Naive thymus-derived CD4-positive, alpha-beta T cell (primary cell): ENCODE measurements at regions of chr12 and their contacts with region 1.

Region 1: DNA sequence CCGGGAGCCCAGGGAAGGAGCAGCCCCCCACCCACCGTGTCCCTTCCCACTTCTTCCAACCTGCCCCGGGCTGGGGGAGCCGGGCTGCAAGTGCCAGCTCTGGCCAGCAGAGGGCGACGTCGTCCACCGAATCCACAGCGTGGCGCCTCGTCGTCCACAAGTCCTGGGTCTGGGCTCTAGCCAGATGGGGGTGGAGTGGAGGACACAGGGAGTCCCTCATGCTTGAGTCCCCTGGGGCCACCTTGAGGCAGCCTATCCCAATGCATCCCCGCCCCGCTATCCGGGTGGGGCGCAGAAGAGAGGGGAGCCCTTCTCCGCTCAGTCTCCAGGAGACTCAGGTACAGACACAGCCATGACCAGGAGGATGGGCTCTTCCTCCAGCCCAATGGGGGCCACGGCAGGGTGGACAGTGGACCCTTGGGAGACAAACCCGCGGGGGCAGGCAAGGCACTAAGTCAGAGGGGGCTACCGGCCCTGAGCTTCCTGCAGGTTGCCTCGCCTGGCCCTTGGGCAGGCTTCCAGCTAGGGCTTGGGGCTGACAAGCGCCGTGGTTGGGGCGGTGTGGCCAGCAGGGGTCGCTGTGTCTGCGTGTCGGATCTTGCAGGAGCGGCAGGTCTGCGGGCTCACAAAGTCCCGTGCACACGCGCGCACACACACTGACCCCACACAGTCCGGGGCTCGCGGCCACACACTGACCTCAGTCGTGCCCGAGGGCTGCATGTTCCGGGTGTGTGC is 5.5 kb downstream of the AQP5 start:
- DNase-seq: peak; percentile 81 to 98 (median 93)
- ATAC-seq: peak; percentile 93
- H3K4me3 ChIP-seq: peak overlapping the region; percentile 81
- H3K4me3 Mint-ChIP-seq: peak overlapping the region; percentile 70 to 83 (median 80)
- H3K27ac ChIP-seq: no peak overlapping the region
- H3K27ac Mint-ChIP-seq: peak overlapping the region in 1 of 9 donors; percentile 14
- H3K4me1 ChIP-seq: peaks cover 0 to 9% of the 10 kb centered on the region in 2 donors
- H3K4me1 Mint-ChIP-seq: peaks cover 0 to 12% (median 4%) of the 10 kb centered on the region in 7 donors
- H3K27me3 ChIP-seq: no peaks in the 10 kb centered on the region
- H3K27me3 Mint-ChIP-seq: peaks cover 31 to 41% (median 35%) of the 10 kb centered on the region in 5 donors

Region 2: DNA sequence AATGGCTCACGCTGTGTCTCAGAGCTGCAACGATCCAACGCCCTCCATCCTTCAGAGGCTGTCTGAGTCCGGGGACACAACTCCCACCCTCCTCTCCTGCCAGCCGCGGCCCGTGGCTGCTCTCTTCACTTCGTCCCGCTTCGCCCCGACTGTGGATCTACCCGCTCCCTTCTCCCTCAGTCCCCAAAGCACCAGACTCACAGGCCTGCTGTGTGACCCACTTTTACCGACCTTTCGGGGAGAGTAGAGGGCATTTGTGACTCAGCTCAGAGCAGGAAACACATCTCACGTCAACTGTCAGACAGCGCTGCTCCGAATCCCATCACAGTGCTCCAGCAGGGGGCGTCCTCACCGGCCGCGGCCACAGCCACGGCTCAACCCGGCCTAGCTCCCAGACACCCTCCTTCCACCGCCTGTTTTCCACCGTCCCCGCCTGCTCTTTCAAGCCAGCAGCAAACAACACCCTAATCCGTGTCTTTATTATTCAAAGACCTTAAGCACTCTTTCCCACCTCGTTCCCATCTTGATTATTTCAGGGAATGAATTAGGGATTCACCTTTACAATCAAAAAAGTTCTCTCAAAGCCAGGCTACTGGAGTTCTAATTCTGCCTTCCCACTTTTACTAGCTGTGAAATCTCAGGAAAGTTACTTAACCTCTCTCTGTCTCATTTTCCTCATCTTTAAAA is 21.7 kb before region 1 on chr12:
- CTCF ChIA-PET with region 1: interaction called, 21 read pairs
- POLR2A ChIA-PET with region 1: no interaction called
- intact Hi-C with region 1: no loop called
- DNase-seq: peak; percentile 41 to 86 (median 62)
- ATAC-seq: peak; percentile 97
- H3K4me3 ChIP-seq: peak overlapping the region; percentile 24
- H3K4me3 Mint-ChIP-seq: peak overlapping the region; percentile 77 to 94 (median 88)
- H3K27ac ChIP-seq: no peak overlapping the region
- H3K27ac Mint-ChIP-seq: peak overlapping the region; percentile 4 to 93 (median 72)
- H3K4me1 ChIP-seq: no peaks in the 10 kb centered on the region
- H3K4me1 Mint-ChIP-seq: peaks cover 6 to 27% (median 15%) of the 10 kb centered on the region in 7 donors
- H3K27me3 ChIP-seq: no peaks in the 10 kb centered on the region
- H3K27me3 Mint-ChIP-seq: peaks cover 0 to 10% (median 7%) of the 10 kb centered on the region in 5 donors

Region 3: DNA sequence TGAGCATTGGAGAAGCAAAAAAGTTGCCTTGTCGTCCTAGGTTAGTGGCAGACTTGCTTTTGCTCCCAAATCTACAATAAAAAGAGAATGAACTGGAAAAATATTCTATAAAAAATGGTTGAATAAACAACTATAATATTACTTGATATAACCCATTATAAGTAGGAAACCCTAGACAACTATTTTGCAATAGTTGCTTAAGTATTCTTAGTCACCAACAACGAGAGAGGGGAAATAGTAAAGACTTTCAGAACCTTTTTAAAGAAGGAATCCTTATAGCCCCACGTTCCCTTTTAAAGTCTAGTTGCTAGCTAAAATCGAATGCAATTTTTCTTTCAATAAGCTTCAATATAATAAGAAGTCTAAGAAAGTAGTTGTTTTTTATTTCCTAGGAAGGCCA is 23.1 kb after region 1 on chr12:
- CTCF ChIA-PET with region 1: no interaction called
- POLR2A ChIA-PET with region 1: no interaction called
- intact Hi-C with region 1: no loop called
- DNase-seq: no peak
- ATAC-seq: no peak
- H3K4me3 ChIP-seq: no peak overlapping the region
- H3K4me3 Mint-ChIP-seq: no peak overlapping the region
- H3K27ac ChIP-seq: no peak overlapping the region
- H3K27ac Mint-ChIP-seq: no peak overlapping the region
- H3K4me1 ChIP-seq: no peaks in the 10 kb centered on the region
- H3K4me1 Mint-ChIP-seq: peaks cover 0 to 6% (median 0%) of the 10 kb centered on the region in 7 donors
- H3K27me3 ChIP-seq: no peaks in the 10 kb centered on the region
- H3K27me3 Mint-ChIP-seq: no peaks in the 10 kb centered on the region

Region 4: DNA sequence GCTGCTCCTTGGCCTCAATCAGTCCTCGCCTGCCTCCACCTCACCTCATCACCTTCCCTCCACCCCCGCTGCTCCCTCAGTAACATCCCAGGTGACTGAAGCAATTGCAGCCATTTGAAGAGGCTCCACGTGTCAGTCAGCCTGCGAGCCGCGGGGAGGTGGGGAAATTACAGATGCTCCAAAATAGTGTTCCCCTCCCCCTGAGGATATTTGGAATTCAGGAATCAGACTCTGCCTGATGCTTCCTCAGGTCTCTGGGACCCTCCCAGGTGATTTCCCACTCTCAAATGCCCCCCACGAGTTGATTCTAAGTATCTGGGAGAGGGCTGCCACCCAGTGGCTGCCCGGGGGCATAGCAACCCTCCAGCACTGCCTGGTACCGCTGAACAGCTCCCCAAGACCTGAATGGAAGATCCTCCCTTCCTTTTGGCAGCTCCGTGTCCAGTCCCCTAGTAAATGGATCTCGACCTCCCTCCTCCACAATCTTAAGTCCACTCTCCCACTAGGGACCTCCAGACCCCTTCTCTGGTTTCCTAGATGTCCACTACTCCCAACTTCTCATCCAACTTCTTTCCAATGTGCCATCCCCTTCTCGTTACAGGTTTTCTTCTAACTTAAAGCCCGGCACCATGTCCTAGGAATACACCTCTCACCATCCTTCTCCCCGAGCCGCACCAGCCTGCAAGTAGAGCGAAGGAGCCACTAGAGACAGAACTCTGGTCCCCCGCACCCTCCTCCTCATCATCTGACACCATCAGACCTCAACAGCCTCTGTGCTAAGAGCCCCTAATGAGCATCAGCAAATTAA is 88.8 kb after region 1 on chr12:
- CTCF ChIA-PET with region 1: interaction called, 30 read pairs
- POLR2A ChIA-PET with region 1: no interaction called
- intact Hi-C with region 1: loop called in 1 of 2 experiments (anchors 1 kb)
- DNase-seq: peak; percentile 41 to 64 (median 56)
- ATAC-seq: peak; percentile 79
- H3K4me3 ChIP-seq: peak overlapping the region; percentile 42
- H3K4me3 Mint-ChIP-seq: peak overlapping the region; percentile 66 to 96 (median 92)
- H3K27ac ChIP-seq: no peak overlapping the region
- H3K27ac Mint-ChIP-seq: peak overlapping the region in 2 of 9 donors; percentile 46 to 57
- H3K4me1 ChIP-seq: peaks cover 7 to 31% of the 10 kb centered on the region in 2 donors
- H3K4me1 Mint-ChIP-seq: peaks cover 17 to 48% (median 41%) of the 10 kb centered on the region in 7 donors
- H3K27me3 ChIP-seq: peaks cover 0 to 9% of the 10 kb centered on the region in 2 donors
- H3K27me3 Mint-ChIP-seq: peaks cover 38 to 56% (median 48%) of the 10 kb centered on the region in 5 donors

Region 5: GRCh38 chr12:50174971-50175715 is 207.9 kb after region 1 on chr12:
- CTCF ChIA-PET with region 1: interaction called, 5 read pairs
- POLR2A ChIA-PET with region 1: no interaction called
- intact Hi-C with region 1: loop called (anchors 1 kb)
- DNase-seq: peak in 7 of 9 donors; percentile 25 to 67 (median 56)
- ATAC-seq: peak; percentile 63
- H3K4me3 ChIP-seq: no peak overlapping the region
- H3K4me3 Mint-ChIP-seq: no peak overlapping the region
- H3K27ac ChIP-seq: no peak overlapping the region
- H3K27ac Mint-ChIP-seq: peak overlapping the region in 5 of 9 donors; percentile 3 to 71 (median 32)
- H3K4me1 ChIP-seq: no peaks in the 10 kb centered on the region
- H3K4me1 Mint-ChIP-seq: peaks cover 0 to 5% (median 0%) of the 10 kb centered on the region in 7 donors
- H3K27me3 ChIP-seq: no peaks in the 10 kb centered on the region
- H3K27me3 Mint-ChIP-seq: no peaks in the 10 kb centered on the region